ENCODE measurements at regions of chr11 and their contacts with region 1.

Region 1: DNA sequence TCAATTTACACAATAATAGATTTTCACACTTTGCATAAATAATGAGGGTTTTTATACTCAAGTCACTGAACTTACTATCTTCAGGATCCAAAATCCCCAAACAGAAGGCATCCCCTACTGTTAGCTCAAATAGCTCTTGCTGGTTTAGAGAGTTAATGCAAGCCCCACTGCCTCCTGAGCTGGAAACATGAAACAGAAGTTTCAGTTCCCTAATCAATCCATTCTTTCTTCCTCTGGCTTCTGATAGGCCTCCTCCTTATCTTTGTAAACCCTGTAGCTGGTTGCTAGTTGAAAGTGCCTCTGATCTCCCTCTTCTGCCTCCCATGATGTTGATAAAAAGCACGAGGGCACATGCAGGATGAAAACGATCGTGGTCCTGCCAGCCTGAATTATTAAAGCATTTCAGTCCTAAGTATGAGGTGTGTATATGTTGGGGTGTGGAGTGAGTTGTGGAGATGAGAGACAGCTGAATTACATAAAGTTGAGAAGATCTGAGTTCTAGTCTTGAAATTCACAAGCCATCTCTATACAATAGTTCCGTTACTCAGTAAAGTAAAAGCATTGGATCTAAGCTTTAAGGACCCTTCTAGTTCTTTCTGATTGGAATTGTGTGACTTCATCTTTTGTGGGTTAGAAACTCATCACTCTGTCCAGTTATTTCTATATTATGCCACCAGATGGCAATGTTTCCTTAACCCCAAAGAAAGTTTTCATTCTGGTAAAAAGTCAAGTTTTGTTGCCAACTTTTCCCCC is 35.0 kb upstream of the EHF start:
- DNase-seq: peak; percentile 69
- H3K4me3 Mint-ChIP-seq: no peak overlapping the region
- H3K27ac Mint-ChIP-seq: peak overlapping the region; percentile 83
- H3K4me1 Mint-ChIP-seq: peaks cover 23% of the 10 kb centered on the region
- H3K27me3 Mint-ChIP-seq: no peaks in the 10 kb centered on the region
- CTCF ChIP-seq: peak; percentile 66

Region 2: GRCh38 chr11:34599406-34599901 is 13.5 kb after region 1 on chr11:
- CTCF ChIA-PET with region 1: interaction called, 22 read pairs
- POLR2A ChIA-PET with region 1: interaction called, 6 read pairs
- intact Hi-C with region 1: no loop called
- DNase-seq: peak; percentile 51
- H3K4me3 Mint-ChIP-seq: no peak overlapping the region
- H3K27ac Mint-ChIP-seq: peak overlapping the region; percentile 25
- H3K4me1 Mint-ChIP-seq: peaks cover 33% of the 10 kb centered on the region
- H3K27me3 Mint-ChIP-seq: no peaks in the 10 kb centered on the region
- CTCF ChIP-seq: no peak

Region 3: DNA sequence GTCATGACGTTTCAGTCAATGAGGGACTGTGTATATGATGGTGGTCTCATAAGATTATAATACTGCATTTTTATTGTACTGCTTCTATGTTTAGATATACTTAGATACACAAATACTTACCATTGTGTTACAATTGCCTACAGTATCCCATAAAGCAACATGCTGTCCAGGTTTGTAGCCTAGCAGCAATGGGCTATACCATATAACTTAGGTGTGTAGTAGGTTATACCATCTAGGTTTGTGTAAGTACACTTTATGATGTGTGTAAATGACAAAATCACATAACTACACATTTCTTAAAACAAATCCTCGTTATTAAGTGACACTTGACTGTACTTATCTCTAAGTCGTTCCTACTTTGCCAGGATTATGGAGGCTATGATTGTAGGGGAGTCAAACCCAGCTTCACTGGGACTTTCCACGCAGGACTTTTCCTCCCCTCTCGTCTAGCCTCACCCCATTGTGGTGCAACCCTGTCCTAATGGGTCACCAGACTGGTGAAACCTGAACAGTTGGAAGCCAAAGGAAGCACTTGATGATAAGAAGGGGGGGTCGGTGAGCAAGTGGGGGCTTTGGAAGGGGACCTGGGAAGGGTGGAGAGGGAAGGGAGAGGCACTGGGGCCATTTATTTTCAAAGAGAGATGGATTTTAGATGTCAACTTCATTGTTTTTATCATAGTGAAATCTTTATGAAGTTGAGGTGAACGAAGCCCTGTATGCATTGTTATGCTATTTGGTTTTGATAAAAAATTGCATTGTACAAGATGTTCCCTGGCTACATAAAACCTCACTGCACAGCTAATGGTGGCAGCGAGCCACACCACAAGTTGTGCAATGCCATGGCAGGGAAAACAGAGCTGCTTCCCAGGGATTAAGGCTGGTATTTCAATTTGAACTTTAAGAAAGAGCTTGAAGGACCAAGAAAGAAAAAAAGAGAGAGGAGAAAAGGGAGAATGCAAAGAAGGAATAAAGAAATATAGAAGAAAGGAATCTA is 164.1 kb after region 1 on chr11:
- CTCF ChIA-PET with region 1: interaction called, 4 read pairs
- POLR2A ChIA-PET with region 1: interaction called, 4 read pairs
- intact Hi-C with region 1: loop called (anchors 5 kb)
- DNase-seq: peak; percentile 96
- H3K4me3 Mint-ChIP-seq: peak overlapping the region; percentile 66
- H3K27ac Mint-ChIP-seq: peak overlapping the region; percentile 90
- H3K4me1 Mint-ChIP-seq: peaks cover 46% of the 10 kb centered on the region
- H3K27me3 Mint-ChIP-seq: no peaks in the 10 kb centered on the region
- CTCF ChIP-seq: no peak

Region 4: DNA sequence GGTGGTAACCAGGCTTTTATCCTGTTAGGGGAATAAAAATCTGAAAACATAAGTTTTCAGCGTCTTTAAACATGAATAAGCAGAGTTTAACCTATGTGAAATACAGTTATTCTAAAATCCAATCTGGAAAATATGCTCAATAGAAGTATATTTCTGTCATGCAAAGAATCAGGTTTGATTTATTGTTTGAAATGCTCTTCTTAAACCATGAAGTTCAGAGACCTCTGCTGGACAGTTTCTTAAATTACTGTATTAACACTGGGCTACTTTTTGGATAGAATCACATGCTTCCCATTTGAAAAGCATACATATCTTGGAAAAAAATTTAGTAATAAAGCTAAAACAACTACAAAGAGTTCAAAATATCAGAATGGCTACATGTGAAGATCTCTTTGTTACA is 304.9 kb after region 1 on chr11:
- CTCF ChIA-PET with region 1: interaction called, 116 read pairs
- POLR2A ChIA-PET with region 1: interaction called, 19 read pairs
- intact Hi-C with region 1: loop called (anchors 1 kb)
- DNase-seq: peak; percentile 64
- H3K4me3 Mint-ChIP-seq: no peak overlapping the region
- H3K27ac Mint-ChIP-seq: no peak overlapping the region
- H3K4me1 Mint-ChIP-seq: peaks cover 12% of the 10 kb centered on the region
- H3K27me3 Mint-ChIP-seq: no peaks in the 10 kb centered on the region
- CTCF ChIP-seq: peak; percentile 46